ENCODE measurements at regions of chr7 and their contacts with region 1.

Region 1: DNA sequence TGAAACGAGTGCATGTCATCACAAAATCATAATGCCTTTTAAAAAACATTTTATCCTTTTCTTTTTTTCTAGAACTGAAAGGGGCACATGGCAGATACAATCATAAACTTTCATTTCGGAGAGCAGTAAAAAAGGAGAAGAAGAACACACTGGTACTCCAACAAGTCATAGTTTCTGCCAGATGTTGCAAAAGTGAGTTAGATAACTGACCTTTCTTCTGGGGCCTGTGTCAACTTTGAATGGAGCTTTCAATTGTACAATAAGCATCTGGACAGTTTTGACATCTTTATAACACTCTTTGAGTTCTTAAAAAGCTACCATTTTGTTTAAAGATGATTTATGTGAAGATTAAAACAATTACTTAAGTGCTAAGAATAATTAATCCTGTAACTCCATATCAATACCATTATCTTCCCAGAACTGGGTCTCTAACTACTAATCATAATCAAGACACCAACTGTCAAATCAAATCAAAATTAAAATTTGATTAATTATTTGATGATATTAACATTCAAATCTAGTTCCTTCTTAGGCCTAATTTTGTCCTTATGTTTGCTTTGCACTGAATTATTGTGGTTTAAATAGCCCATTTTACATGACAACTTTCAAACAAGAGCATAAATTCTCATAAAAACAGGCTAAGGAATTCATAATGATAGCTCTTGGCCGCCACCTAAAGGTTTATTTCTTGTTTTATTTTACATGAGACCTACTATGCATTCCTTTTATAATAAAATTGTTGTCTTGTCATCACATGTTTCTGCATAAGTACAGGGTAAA is 19.5 kb upstream of the ITGB8 start:
- DNase-seq: no peak
- H3K4me3 Mint-ChIP-seq: no peak overlapping the region
- H3K27ac Mint-ChIP-seq: no peak overlapping the region
- H3K4me1 Mint-ChIP-seq: no peaks in the 10 kb centered on the region
- H3K27me3 Mint-ChIP-seq: no peaks in the 10 kb centered on the region

Region 2: DNA sequence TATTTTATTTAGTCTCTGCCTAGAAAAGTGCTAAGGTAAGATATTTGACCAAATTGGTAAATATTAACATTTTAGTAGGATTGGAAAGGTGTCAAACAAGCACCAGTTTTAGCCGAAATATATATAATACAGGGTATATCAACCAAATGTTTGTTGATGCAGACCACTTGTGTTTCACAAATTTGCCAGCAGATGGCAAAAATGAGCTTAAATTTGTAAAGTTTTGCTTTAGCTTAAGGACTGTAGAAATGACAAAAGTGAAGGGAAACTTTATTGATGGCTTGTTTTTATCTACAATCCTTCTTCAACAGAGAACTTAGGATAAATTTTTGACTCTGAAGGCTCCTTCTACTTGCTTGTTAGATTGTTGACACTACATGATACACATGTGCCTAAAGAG is 597.5 kb before region 1 on chr7:
- CTCF ChIA-PET with region 1: interaction called, 5 read pairs
- intact Hi-C with region 1: loop called (anchors 1 kb)
- DNase-seq: peak; percentile 66
- H3K4me3 Mint-ChIP-seq: no peak overlapping the region
- H3K27ac Mint-ChIP-seq: no peak overlapping the region
- H3K4me1 Mint-ChIP-seq: peaks cover 15% of the 10 kb centered on the region
- H3K27me3 Mint-ChIP-seq: peaks cover under 1% of the 10 kb centered on the region

Region 3: DNA sequence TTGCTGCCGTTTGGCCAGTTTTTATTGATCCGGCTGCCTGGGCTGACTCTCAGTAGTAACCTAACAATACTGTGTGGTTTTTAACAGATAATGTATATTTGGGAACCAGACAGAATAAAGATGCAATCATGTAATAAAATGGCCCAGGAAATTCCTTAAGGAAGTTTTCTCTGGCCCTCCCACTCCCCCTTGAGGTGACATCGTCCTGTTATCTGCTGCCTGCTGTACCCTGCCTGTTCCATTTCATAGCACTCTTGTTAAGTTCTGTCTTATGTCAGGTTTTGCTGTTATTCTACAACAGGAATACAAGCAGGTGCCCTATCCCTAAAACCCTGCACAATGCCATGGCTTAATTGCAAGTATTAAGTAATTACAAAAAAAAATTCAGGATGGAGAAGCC is 32.1 kb after region 1 on chr7:
- CTCF ChIA-PET with region 1: no interaction called
- intact Hi-C with region 1: no loop called
- DNase-seq: no peak
- H3K4me3 Mint-ChIP-seq: no peak overlapping the region
- H3K27ac Mint-ChIP-seq: no peak overlapping the region
- H3K4me1 Mint-ChIP-seq: no peaks in the 10 kb centered on the region
- H3K27me3 Mint-ChIP-seq: peaks cover 5% of the 10 kb centered on the region

Region 4: DNA sequence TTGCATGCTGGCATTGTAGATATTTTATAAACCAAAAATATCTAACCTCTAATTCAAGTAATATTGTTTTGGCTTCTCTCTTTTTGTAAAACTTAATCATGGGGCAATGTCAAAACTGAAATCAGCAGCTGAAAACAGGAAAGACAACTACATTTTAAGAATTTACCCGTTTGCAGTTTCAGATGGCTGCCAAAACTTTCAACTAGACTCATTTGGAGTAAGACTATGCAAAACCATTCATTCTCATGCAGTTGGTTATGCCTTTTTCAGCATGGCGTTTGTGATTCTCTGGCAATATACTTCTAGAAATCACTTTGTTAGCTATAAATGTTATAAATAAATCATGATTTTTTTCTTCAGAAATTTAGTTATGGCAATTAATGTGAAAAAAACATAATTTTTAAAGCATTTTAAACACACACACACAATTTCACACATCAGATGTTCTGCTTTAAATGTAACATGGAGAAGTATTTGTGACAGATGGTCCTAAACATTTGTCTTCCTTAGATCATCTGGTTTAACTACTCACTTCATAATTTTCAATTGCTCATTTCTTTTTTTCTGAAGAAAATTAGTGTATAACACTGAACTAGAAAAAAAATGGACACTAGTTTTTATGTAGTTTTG is 136.0 kb after region 1 on chr7:
- CTCF ChIA-PET with region 1: no interaction called
- intact Hi-C with region 1: no loop called
- DNase-seq: no peak
- H3K4me3 Mint-ChIP-seq: no peak overlapping the region
- H3K27ac Mint-ChIP-seq: no peak overlapping the region
- H3K4me1 Mint-ChIP-seq: no peaks in the 10 kb centered on the region
- H3K27me3 Mint-ChIP-seq: peaks cover 2% of the 10 kb centered on the region

Measured in activated naive CD4-positive, alpha-beta T cell treated with anti-CD3 and anti-CD28 coated beads for 36 hours (primary cell).